BJ (cell line): ENCODE measurements at regions of chr15 and their contacts with region 1.

Region 1: GRCh38 chr15:62637574-62637897 is 405.0 kb upstream of the TPM1 start:
- DNase-seq: no peak
- H3K4me3 ChIP-seq: no peak overlapping the region
- H3K27me3 ChIP-seq: no peaks in the 10 kb centered on the region
- CTCF ChIP-seq: no peak

Region 2: GRCh38 chr15:62495670-62496614 is 141.6 kb before region 1 on chr15:
- CTCF ChIA-PET with region 1: no interaction called
- POLR2A ChIA-PET with region 1: interaction called, 13 read pairs
- DNase-seq: peak; percentile 82
- H3K4me3 ChIP-seq: no peak overlapping the region
- H3K27me3 ChIP-seq: no peaks in the 10 kb centered on the region
- CTCF ChIP-seq: no peak

Region 3: GRCh38 chr15:62649793-62650420 is 12.4 kb after region 1 on chr15:
- CTCF ChIA-PET with region 1: no interaction called
- POLR2A ChIA-PET with region 1: no interaction called
- DNase-seq: no peak
- H3K4me3 ChIP-seq: no peak overlapping the region
- H3K27me3 ChIP-seq: no peaks in the 10 kb centered on the region
- CTCF ChIP-seq: no peak